CD4-positive, alpha-beta memory T cell (primary cell): ENCODE measurements at regions of chr5 and their contacts with region 1.

Region 1: DNA sequence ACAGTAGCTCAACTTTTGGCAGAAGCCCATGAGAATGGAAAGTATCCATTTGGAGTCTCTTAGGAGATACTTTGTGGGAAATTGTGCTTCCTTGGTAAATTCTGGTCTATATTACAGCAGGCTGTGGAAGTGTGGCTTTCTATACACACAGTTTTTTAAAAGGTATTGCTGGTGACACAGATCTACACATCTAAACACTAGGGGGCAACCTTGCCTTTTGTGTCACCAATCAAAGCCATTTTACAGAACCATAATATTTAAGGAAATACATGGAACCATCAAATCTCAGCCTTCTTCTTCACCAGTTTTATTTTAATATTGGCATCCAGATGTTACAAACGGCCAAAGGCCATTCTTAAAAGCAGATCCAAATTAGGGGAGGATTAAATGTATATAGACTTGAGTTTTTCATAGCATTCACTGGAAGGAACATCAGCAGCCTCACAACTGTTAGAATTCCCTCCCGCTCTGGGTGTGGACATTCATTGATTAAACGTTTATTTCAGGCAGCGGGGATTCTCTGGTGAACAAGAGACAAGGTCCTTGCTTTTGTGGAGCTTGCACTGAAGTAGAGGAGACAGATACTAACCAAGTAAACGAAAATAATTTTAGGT is 132.4 kb upstream of the EPB41L4A start:
- DNase-seq: peak; percentile 34 to 60 (median 57)
- H3K4me3 ChIP-seq: no peak overlapping the region
- H3K4me3 Mint-ChIP-seq: no peak overlapping the region
- H3K27ac ChIP-seq: no peak overlapping the region
- H3K27ac Mint-ChIP-seq: no peak overlapping the region
- H3K4me1 ChIP-seq: no peaks in the 10 kb centered on the region
- H3K4me1 Mint-ChIP-seq: peaks cover 0 to 2% (median 0%) of the 10 kb centered on the region in 4 donors
- H3K27me3 ChIP-seq: no peaks in the 10 kb centered on the region
- H3K27me3 Mint-ChIP-seq: no peaks in the 10 kb centered on the region

Region 2: GRCh38 chr5:112338681-112339337 is 212.7 kb before region 1 on chr5:
- CTCF ChIA-PET with region 1: no interaction called
- POLR2A ChIA-PET with region 1: no interaction called
- intact Hi-C with region 1: no loop called
- DNase-seq: no peak
- H3K4me3 ChIP-seq: no peak overlapping the region
- H3K4me3 Mint-ChIP-seq: no peak overlapping the region
- H3K27ac ChIP-seq: no peak overlapping the region
- H3K27ac Mint-ChIP-seq: no peak overlapping the region
- H3K4me1 ChIP-seq: no peaks in the 10 kb centered on the region
- H3K4me1 Mint-ChIP-seq: no peaks in the 10 kb centered on the region
- H3K27me3 ChIP-seq: no peaks in the 10 kb centered on the region
- H3K27me3 Mint-ChIP-seq: peaks cover 2% of the 10 kb centered on the region in 2 donors

Region 3: GRCh38 chr5:112419986-112420864 is 131.3 kb before region 1 on chr5:
- CTCF ChIA-PET with region 1: no interaction called
- POLR2A ChIA-PET with region 1: no interaction called
- intact Hi-C with region 1: no loop called
- DNase-seq: peak in 2 of 5 donors; percentile 10 to 39
- H3K4me3 ChIP-seq: no peak overlapping the region
- H3K4me3 Mint-ChIP-seq: peak overlapping the region in 7 of 8 donors; percentile 10 to 61 (median 33)
- H3K27ac ChIP-seq: no peak overlapping the region
- H3K27ac Mint-ChIP-seq: no peak overlapping the region
- H3K4me1 ChIP-seq: peaks cover 23% of the 10 kb centered on the region
- H3K4me1 Mint-ChIP-seq: peaks cover 7 to 19% (median 14%) of the 10 kb centered on the region in 4 donors
- H3K27me3 ChIP-seq: peaks cover 10% of the 10 kb centered on the region
- H3K27me3 Mint-ChIP-seq: peaks cover 30 to 32% of the 10 kb centered on the region in 2 donors

Region 4: GRCh38 chr5:112533362-112533761 is 18.2 kb before region 1 on chr5:
- CTCF ChIA-PET with region 1: interaction called, 10 read pairs
- POLR2A ChIA-PET with region 1: no interaction called
- intact Hi-C with region 1: no loop called
- DNase-seq: no peak
- H3K4me3 ChIP-seq: no peak overlapping the region
- H3K4me3 Mint-ChIP-seq: no peak overlapping the region
- H3K27ac ChIP-seq: no peak overlapping the region
- H3K27ac Mint-ChIP-seq: no peak overlapping the region
- H3K4me1 ChIP-seq: no peaks in the 10 kb centered on the region
- H3K4me1 Mint-ChIP-seq: no peaks in the 10 kb centered on the region
- H3K27me3 ChIP-seq: no peaks in the 10 kb centered on the region
- H3K27me3 Mint-ChIP-seq: peaks cover 0 to 16% of the 10 kb centered on the region in 2 donors

Region 5: DNA sequence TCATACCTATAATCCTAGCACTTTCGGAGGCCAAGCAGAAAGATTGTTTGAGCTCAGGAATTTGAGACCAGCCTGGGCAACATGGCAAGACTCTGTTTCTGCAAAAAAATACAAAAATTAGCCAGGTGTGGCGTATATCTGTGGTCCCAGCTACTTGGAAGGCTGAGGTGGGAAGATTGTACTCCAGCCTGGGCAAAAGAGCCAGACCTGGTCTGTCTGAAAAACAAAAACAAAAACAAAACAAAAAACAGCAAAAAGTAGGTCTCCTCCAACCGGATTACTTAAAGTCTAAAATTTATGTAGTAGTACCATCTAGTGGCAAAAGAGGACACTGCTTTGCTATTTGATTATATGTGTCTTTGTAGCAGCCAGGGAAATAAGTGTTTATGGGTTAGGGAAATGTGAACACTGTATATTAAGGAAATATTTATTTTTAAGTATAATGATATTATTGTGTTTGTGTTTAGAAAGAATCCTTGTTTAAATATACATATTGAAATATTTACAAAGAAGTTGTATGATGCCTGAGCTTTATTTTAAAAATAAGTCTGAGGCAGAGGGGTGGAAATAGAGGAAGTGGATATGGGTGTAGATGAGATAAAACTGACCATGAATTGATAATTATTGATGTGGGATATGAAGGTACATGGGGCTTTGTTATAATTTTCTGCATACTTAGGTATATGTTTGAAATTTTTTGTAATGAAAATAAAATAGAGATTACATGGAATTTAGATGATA is 206.1 kb after region 1 on chr5:
- CTCF ChIA-PET with region 1: interaction called, 196 read pairs
- POLR2A ChIA-PET with region 1: no interaction called
- intact Hi-C with region 1: loop called (anchors 1 kb)
- DNase-seq: peak in 4 of 5 donors; percentile 50 to 64 (median 52)
- H3K4me3 ChIP-seq: no peak overlapping the region
- H3K4me3 Mint-ChIP-seq: peak overlapping the region in 1 of 8 donors; percentile 20
- H3K27ac ChIP-seq: no peak overlapping the region
- H3K27ac Mint-ChIP-seq: peak overlapping the region in 5 of 7 donors; percentile 3 to 71 (median 59)
- H3K4me1 ChIP-seq: no peaks in the 10 kb centered on the region
- H3K4me1 Mint-ChIP-seq: peaks cover 9 to 12% (median 9%) of the 10 kb centered on the region in 4 donors
- H3K27me3 ChIP-seq: no peaks in the 10 kb centered on the region
- H3K27me3 Mint-ChIP-seq: no peaks in the 10 kb centered on the region

Region 6: DNA sequence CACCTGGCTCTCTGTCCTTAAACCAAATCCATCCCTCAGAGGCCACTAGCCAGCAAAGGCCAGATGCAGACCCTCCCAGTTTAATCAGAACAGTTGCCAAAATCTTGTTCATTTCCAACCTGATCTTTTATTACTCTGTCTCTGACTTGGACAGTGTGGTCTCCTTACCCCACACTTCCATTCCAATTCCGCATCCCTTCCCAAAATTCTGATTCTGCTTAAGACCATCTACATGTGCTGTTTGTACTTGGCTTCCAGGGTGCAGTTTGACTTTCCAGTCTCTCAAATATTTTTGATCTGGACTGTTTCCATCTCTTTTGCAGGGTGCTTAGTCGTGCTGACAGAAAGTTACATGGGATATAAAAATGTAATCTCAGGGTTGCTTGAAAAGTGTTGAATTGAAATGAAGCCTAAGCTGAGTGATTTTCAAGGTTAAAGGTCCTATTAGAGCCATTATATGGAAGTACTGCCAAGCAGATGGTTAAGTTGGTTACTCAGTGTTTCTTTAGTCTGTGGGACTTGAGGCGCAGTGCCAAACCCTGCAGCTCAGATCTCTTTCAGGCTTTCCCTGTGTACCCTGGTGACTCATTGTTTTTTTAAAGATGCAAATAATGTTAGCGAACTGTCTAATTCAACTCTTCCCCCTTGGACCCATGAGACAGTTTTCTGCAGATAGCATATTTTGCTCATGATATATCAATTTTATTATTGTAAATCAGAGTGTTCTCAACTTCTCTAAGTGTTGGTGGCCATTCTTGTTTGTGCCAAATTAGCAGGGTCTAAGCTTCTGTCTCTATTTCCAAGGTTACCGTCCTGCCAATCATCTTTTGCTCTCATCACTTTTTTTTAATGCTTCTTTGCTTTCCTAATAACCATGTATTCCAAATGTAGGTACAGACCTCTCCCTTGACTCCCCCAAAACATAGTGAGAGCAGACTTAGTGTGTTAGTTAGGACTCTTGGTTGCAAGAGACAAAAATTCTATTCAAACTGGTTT is 406.9 kb after region 1 on chr5:
- CTCF ChIA-PET with region 1: interaction called, 15 read pairs
- POLR2A ChIA-PET with region 1: no interaction called
- intact Hi-C with region 1: no loop called
- DNase-seq: no peak
- H3K4me3 ChIP-seq: no peak overlapping the region
- H3K4me3 Mint-ChIP-seq: no peak overlapping the region
- H3K27ac ChIP-seq: no peak overlapping the region
- H3K27ac Mint-ChIP-seq: no peak overlapping the region
- H3K4me1 ChIP-seq: peaks cover 12% of the 10 kb centered on the region
- H3K4me1 Mint-ChIP-seq: peaks cover 2 to 8% (median 5%) of the 10 kb centered on the region in 4 donors
- H3K27me3 ChIP-seq: no peaks in the 10 kb centered on the region
- H3K27me3 Mint-ChIP-seq: peaks cover 0 to 1% of the 10 kb centered on the region in 2 donors

Region 7: GRCh38 chr5:112976432-112977309 is 425.1 kb after region 1 on chr5 and contains the start of gene DCP2:
- CTCF ChIA-PET with region 1: no interaction called
- POLR2A ChIA-PET with region 1: no interaction called
- intact Hi-C with region 1: loop called (anchors 5 kb)
- DNase-seq: peak; percentile 95 to 97 (median 97)
- H3K4me3 ChIP-seq: peak within 1 kb of the TSS; percentile 77 to 79
- H3K4me3 Mint-ChIP-seq: peak within 1 kb of the TSS; percentile 96 to 100 (median 99)
- H3K27ac ChIP-seq: peak within 1 kb of the TSS; percentile 85
- H3K27ac Mint-ChIP-seq: peak within 1 kb of the TSS; percentile 94 to 98 (median 97)
- H3K4me1 ChIP-seq: peaks cover 45% of the 10 kb centered on the region
- H3K4me1 Mint-ChIP-seq: peaks cover 31 to 63% (median 43%) of the 10 kb centered on the region in 4 donors
- H3K27me3 ChIP-seq: no peaks in the 10 kb centered on the region
- H3K27me3 Mint-ChIP-seq: peaks cover 0 to 4% of the 10 kb centered on the region in 2 donors
- total RNA-seq, gene DCP2: 116 to 123 TPM